Activated naive CD4-positive, alpha-beta T cell treated with anti-CD3 and anti-CD28 coated beads for 36 hours (primary cell): ENCODE measurements at regions of chr6 and their contacts with region 1.

Region 1: DNA sequence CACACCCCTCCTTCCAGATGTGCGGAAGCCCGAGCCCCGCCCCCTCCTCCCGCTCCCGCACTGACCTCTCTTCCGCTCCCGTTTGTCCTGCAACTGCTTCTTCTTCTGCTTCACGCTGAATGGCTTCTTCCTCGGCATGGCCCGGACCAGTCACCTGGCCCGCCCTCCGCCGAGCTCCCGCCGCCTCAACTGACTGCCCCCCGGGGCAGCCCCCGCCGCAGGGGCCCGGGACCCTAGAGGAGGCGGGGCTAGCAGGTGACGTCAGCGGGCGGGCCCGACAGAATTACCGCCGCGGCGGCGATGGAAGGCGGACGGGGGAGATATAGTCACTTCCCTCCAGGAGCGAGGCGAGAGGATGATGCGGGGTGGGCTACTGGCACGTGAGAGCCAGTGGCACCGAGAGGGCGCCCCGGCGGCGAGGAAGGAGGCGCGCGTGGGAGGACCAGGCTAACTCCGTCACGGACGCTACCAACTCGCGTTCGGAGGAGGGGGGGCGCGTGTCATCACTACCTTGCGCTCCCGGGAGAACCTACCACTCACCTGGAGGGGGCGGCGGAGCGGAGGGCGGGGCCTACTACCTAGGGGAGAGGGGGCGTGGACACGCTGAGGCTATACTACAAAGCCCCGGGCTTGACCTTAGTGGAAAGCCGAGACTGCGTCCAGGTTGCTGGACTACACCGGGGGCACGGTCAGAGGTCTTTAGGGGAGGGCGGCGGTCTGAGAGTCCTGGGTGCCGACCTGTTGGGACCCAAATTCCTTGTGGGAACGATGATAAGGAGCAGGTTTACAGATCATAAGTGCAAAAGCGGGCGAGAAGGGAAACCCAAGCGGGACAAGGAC is at the start of gene GNL1:
- DNase-seq: peak; percentile 100
- H3K4me3 Mint-ChIP-seq: peak within 1 kb of the TSS; percentile 99
- H3K27ac Mint-ChIP-seq: peak within 1 kb of the TSS; percentile 100
- H3K4me1 Mint-ChIP-seq: peaks cover 38% of the 10 kb centered on the region
- H3K27me3 Mint-ChIP-seq: no peaks in the 10 kb centered on the region
- total RNA-seq, gene GNL1: 78.2 to 82.1 TPM

Region 2: GRCh38 chr6:30066577-30067459 is 489.5 kb before region 1 on chr6 and contains the start of gene PPP1R11:
- CTCF ChIA-PET with region 1: no interaction called
- intact Hi-C with region 1: loop called (anchors 10 kb)
- DNase-seq: peak; percentile 99
- H3K4me3 Mint-ChIP-seq: peak within 1 kb of the TSS; percentile 90
- H3K27ac Mint-ChIP-seq: peak within 1 kb of the TSS; percentile 96
- H3K4me1 Mint-ChIP-seq: peaks cover 48% of the 10 kb centered on the region
- H3K27me3 Mint-ChIP-seq: peaks cover 7% of the 10 kb centered on the region
- total RNA-seq, gene PPP1R11: 42.8 to 46.6 TPM

Region 3: DNA sequence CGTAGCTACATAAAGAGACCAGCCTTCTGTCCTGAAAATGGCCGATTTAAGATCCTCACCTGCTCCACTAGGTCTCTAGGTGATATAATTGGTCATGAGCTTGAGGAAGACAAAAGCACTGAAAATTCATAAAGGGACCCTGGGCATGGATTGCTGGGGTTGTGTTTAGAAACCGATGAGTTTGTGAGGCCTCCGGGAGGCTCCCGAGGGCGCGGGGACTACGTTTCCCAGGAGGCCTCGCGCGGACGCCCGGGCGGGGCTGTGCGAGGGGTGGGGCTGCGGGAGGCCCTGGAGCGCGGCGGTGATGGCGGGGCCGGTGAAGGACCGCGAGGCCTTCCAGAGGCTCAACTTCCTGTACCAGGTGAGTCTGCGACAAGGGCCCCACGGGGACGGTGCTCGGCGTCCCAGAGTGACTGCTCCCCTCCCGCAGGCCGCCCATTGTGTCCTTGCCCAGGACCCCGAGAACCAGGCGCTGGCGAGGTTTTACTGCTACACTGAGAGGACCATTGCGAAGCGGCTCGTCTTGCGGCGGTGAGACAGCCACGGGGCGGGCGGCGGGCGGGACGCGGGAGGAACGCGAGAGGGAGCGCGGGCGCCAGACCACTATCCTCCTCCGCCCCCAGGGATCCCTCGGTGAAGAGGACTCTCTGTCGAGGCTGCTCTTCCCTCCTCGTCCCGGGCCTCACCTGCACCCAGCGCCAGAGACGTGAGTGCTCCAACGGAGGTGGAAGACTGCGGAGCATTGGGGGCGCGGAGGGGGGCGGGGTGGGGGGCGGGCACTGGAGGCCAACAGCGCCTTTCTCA is 211.2 kb before region 1 on chr6 and contains the start of gene RPP21:
- CTCF ChIA-PET with region 1: no interaction called
- intact Hi-C with region 1: loop called (anchors 2 kb)
- DNase-seq: peak; percentile 94
- H3K4me3 Mint-ChIP-seq: peak within 1 kb of the TSS; percentile 87
- H3K27ac Mint-ChIP-seq: peak within 1 kb of the TSS; percentile 86
- H3K4me1 Mint-ChIP-seq: peaks cover 38% of the 10 kb centered on the region
- H3K27me3 Mint-ChIP-seq: no peaks in the 10 kb centered on the region
- total RNA-seq, gene RPP21: 44.8 to 45.0 TPM

Region 4: GRCh38 chr6:30533460-30534294 is 22.6 kb before region 1 on chr6:
- CTCF ChIA-PET with region 1: interaction called, 3 read pairs
- intact Hi-C with region 1: loop called (anchors 2 kb)
- DNase-seq: no peak
- H3K4me3 Mint-ChIP-seq: peak overlapping the region; percentile 27
- H3K27ac Mint-ChIP-seq: peak overlapping the region; percentile 93
- H3K4me1 Mint-ChIP-seq: peaks cover 49% of the 10 kb centered on the region
- H3K27me3 Mint-ChIP-seq: no peaks in the 10 kb centered on the region

Region 5: GRCh38 chr6:30678964-30679726 is 122.9 kb after region 1 on chr6:
- CTCF ChIA-PET with region 1: no interaction called
- intact Hi-C with region 1: loop called (anchors 1 kb)
- DNase-seq: peak; percentile 95
- H3K4me3 Mint-ChIP-seq: peak overlapping the region; percentile 96
- H3K27ac Mint-ChIP-seq: peak overlapping the region; percentile 100
- H3K4me1 Mint-ChIP-seq: peaks cover 21% of the 10 kb centered on the region
- H3K27me3 Mint-ChIP-seq: no peaks in the 10 kb centered on the region

Region 6: GRCh38 chr6:30814136-30815040 is 258.1 kb after region 1 on chr6:
- CTCF ChIA-PET with region 1: no interaction called
- intact Hi-C with region 1: loop called (anchors 5 kb)
- DNase-seq: peak; percentile 81
- H3K4me3 Mint-ChIP-seq: peak overlapping the region; percentile 48
- H3K27ac Mint-ChIP-seq: peak overlapping the region; percentile 95
- H3K4me1 Mint-ChIP-seq: peaks cover 94% of the 10 kb centered on the region
- H3K27me3 Mint-ChIP-seq: no peaks in the 10 kb centered on the region